Naive thymus-derived CD4-positive, alpha-beta T cell (primary cell): ENCODE measurements at regions of chr19 and their contacts with region 1.

Region 1: DNA sequence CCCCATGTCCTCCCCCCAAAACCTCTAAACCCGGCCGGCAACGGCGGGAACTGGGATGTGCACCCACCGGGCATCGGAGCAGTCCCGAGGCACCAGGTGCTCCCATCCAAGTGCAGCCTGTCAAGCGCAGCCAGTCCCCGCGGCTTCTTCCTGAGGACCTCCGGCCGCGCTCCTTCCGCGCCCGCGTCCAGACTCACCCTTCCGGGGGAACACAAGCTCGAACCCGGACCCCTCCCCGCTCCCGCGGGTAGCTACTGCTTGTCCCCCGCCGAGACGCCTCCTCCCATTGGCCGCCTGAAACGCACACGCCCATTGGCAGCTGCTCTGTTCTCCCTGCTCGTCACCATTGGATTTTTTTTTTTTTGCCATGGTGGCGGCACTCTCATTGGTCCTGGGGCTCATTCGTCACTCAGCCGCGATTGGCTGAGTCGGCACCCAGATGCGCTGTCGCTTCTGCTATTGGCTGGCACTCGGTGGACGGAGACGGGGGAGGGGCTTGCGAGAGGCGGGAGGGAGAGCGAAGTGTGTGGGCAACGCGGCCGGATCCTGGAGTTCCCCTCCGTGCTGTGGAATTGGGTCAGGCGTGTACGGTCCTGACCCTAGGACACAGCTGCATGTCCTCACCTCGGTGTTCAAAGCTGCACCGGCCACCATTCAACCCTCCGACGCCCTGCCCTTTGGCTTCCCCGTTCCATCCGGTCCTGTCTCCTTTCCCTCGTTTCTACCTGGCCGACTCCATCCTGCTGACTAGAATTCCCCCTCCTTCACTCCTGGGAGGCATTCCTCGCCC is at the start of gene TYK2:
- DNase-seq: peak; percentile 94 to 99 (median 97)
- ATAC-seq: peak; percentile 98
- H3K4me3 ChIP-seq: peak within 1 kb of the TSS; percentile 94
- H3K4me3 Mint-ChIP-seq: peak within 1 kb of the TSS; percentile 93 to 99 (median 94)
- H3K27ac ChIP-seq: peak within 1 kb of the TSS; percentile 84
- H3K27ac Mint-ChIP-seq: peak within 1 kb of the TSS; percentile 88 to 97 (median 93)
- H3K4me1 ChIP-seq: peaks cover 5 to 10% of the 10 kb centered on the region in 2 donors
- H3K4me1 Mint-ChIP-seq: peaks cover 14 to 34% (median 23%) of the 10 kb centered on the region in 7 donors
- H3K27me3 ChIP-seq: no peaks in the 10 kb centered on the region
- H3K27me3 Mint-ChIP-seq: peaks cover 0 to 3% (median 0%) of the 10 kb centered on the region in 5 donors
- total RNA-seq, gene TYK2: 224 to 346 (median 284) TPM

Region 2: GRCh38 chr19:10279737-10280442 is 100.6 kb before region 1 on chr19:
- CTCF ChIA-PET with region 1: no interaction called
- POLR2A ChIA-PET with region 1: no interaction called
- intact Hi-C with region 1: no loop called
- DNase-seq: no peak
- ATAC-seq: no peak
- H3K4me3 ChIP-seq: no peak overlapping the region
- H3K4me3 Mint-ChIP-seq: no peak overlapping the region
- H3K27ac ChIP-seq: no peak overlapping the region
- H3K27ac Mint-ChIP-seq: peak overlapping the region in 4 of 9 donors; percentile 3 to 86 (median 32)
- H3K4me1 ChIP-seq: peaks cover 0 to 3% of the 10 kb centered on the region in 2 donors
- H3K4me1 Mint-ChIP-seq: peaks cover 4 to 28% (median 8%) of the 10 kb centered on the region in 7 donors
- H3K27me3 ChIP-seq: no peaks in the 10 kb centered on the region
- H3K27me3 Mint-ChIP-seq: no peaks in the 10 kb centered on the region

Region 3: GRCh38 chr19:10315335-10316214 is 64.9 kb before region 1 on chr19 and contains the start of gene FDX2:
- CTCF ChIA-PET with region 1: no interaction called
- POLR2A ChIA-PET with region 1: interaction called, 3 read pairs
- intact Hi-C with region 1: loop called in 1 of 2 experiments (anchors 2 kb)
- DNase-seq: peak; percentile 77 to 94 (median 86)
- ATAC-seq: peak; percentile 92
- H3K4me3 ChIP-seq: peak within 1 kb of the TSS; percentile 86
- H3K4me3 Mint-ChIP-seq: peak within 1 kb of the TSS; percentile 87 to 94 (median 90)
- H3K27ac ChIP-seq: peak within 1 kb of the TSS; percentile 70
- H3K27ac Mint-ChIP-seq: peak within 1 kb of the TSS; percentile 35 to 95 (median 86)
- H3K4me1 ChIP-seq: peaks cover 6 to 13% of the 10 kb centered on the region in 2 donors
- H3K4me1 Mint-ChIP-seq: peaks cover 13 to 23% (median 16%) of the 10 kb centered on the region in 7 donors
- H3K27me3 ChIP-seq: no peaks in the 10 kb centered on the region
- H3K27me3 Mint-ChIP-seq: no peaks in the 10 kb centered on the region
- total RNA-seq, gene FDX2: 5.7 to 10.5 (median 9.3) TPM